ENCODE measurements at regions of chr17 and their contacts with region 1.

Region 1: DNA sequence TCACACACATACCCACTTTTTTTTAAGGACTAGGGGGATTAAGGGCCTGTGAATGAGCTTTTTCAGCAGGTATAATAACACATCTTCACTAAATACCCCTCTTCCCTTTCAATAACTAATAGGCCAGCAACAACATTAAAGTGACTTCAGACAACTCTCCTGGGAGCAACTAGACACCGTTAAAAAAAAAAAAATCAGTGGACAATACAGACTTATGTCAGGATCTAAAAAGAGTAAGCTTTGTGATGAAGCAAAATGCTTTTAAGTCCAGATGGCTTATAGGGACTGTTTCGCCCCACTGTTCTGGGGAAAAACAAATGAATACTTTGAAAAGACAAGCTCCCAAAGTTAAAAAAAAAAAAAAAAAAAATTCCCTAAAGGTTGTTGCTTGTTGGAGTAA is 29.0 kb downstream of the SPAG9 start:
- DNase-seq: no peak
- H3K4me3 ChIP-seq: no peak overlapping the region
- H3K27ac ChIP-seq: no peak overlapping the region
- H3K4me1 ChIP-seq: no peaks in the 10 kb centered on the region
- H3K27me3 ChIP-seq: no peaks in the 10 kb centered on the region
- CTCF ChIP-seq: no peak
- POLR2A ChIP-seq: no peak

Region 2: DNA sequence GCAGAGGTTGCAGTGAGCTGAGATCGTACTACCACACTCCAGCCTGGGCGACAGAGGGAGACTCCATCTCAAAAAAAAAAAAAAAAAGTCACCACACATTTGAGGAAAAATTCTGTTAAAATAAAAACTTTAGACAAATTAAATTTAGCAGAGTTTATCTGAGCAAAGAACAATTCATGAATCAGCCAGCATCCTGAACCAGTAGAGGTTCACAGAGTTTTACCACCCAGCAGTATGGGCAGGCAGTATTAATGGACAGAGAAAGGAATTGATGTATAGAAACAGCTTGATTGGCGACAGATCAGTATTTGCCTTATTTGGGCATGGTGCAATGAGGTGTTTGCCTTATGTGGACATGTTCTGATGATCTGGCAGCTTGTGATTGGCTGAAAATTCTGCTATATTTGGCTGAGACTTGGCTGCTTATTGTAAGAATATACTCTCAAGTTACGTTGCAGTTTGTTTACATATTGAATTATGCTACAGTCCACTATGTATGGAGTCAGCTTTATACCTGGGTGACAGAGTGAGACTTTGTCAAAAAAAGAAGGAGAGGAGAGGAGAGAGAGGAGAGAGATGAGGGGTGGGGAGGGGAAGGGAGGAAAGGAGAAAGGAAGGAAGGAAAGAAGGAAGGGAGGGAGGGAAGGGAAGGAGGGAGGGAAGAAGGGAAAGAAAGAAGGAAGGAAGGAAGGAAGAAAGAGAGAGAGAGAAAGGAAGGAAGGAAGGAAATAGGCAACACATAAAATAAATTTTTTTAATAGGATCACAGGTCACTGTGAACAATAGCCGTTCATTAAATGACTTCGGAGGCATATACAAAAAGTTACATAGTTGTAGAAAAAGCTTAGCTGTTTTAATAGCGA is 442.4 kb before region 1 on chr17:
- intact Hi-C with region 1: loop called (anchors 5 kb)
- DNase-seq: no peak
- H3K4me3 ChIP-seq: no peak overlapping the region
- H3K27ac ChIP-seq: no peak overlapping the region
- H3K4me1 ChIP-seq: no peaks in the 10 kb centered on the region
- H3K27me3 ChIP-seq: no peaks in the 10 kb centered on the region
- CTCF ChIP-seq: no peak
- POLR2A ChIP-seq: no peak

Region 3: GRCh38 chr17:51147650-51148049 is 56.0 kb after region 1 on chr17:
- intact Hi-C with region 1: no loop called
- DNase-seq: no peak
- H3K4me3 ChIP-seq: no peak overlapping the region
- H3K27ac ChIP-seq: no peak overlapping the region
- H3K4me1 ChIP-seq: no peaks in the 10 kb centered on the region
- H3K27me3 ChIP-seq: no peaks in the 10 kb centered on the region
- CTCF ChIP-seq: no peak
- POLR2A ChIP-seq: no peak

Measured in breast epithelium (tissue), 4 donors.